ENCODE measurements at regions of chr5 and their contacts with region 1.

Region 1: DNA sequence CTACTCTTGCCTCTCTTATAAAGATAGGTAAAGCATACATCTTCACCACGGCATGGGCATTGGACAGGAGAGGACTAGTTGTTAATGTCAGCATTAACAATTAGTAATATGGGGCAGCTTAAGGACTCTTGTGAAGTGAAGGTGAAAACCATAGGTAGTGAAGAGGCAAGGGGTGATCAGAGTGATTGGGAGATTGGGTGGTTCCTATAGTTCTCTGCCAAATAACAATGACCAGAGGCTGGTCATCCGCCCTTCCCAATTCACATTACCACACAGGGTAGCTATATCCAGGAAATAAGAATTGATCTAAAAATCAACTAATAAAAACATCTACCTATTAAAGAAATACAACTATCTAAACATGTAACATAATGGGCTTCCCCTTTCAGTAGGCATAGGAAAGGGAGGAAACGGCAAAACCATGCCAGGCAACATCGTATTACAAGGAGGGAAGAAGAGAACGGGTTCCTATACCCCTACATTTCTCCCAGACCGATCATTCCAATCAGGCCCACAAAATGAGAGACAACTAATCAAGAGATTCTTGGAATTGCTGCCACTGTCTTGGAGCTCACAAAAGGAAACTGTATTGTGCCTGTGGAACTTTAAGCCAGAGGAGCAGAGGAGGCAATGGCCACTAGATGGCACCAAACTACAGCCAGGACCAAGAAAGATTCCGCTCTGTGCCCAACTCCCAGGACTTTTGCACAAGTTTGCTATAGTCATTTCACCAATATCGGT is 121.6 kb downstream of the FBXL17 start:
- DNase-seq: no peak
- H3K4me3 ChIP-seq: no peak overlapping the region
- H3K27ac ChIP-seq: no peak overlapping the region
- H3K4me1 ChIP-seq: peaks cover 13 to 25% (median 22%) of the 10 kb centered on the region in 4 donors
- H3K27me3 ChIP-seq: no peaks in the 10 kb centered on the region
- CTCF ChIP-seq: peak; percentile 77 to 98 (median 94)
- EP300 ChIP-seq: no peak
- POLR2A ChIP-seq: no peak

Region 2: DNA sequence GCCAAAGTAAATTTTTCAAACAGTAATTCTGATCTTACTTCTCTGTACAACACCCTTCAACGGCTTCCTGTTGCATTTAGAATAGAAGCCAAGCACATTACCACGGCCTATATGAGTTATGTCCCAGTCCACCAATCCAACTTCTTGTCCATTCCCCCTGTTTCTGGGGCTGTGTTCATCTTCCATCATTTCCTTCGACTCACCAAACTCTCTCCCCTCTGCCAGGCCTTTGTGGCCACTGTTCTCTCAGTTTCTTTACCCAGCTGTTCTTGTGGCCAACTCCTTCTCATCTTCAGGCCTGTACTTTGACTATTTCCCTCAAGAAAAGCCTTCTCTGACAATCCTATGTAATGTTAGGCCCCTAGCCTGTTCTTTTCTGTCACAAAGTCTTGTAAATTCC is 330.2 kb before region 1 on chr5:
- intact Hi-C with region 1: no loop called
- DNase-seq: no peak
- H3K4me3 ChIP-seq: no peak overlapping the region
- H3K27ac ChIP-seq: no peak overlapping the region
- H3K4me1 ChIP-seq: peaks cover 0 to 11% (median 6%) of the 10 kb centered on the region in 4 donors
- H3K27me3 ChIP-seq: no peaks in the 10 kb centered on the region
- CTCF ChIP-seq: no peak
- EP300 ChIP-seq: no peak
- POLR2A ChIP-seq: no peak

Region 3: DNA sequence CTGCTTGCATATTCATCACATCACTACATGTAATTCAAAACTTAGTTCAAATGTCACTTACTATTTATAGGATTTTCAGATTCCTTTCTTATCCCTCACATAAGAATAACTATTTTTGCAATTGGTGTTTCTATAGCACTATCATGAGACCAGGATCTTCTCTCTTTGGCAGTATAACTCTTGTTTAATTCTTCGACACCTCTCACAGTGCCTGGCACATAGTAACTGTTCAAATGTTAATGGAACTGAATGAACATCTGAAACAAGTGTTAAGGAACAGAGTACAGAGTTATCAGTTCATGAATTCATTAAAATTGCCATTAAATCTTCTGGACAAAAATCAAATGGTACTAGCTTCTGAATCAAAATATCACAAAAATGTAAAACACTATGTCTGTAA is 81.6 kb after region 1 on chr5:
- intact Hi-C with region 1: loop called (anchors 5 kb)
- DNase-seq: no peak
- H3K4me3 ChIP-seq: no peak overlapping the region
- H3K27ac ChIP-seq: no peak overlapping the region
- H3K4me1 ChIP-seq: no peaks in the 10 kb centered on the region
- H3K27me3 ChIP-seq: no peaks in the 10 kb centered on the region
- CTCF ChIP-seq: no peak
- EP300 ChIP-seq: no peak
- POLR2A ChIP-seq: no peak

Region 4: DNA sequence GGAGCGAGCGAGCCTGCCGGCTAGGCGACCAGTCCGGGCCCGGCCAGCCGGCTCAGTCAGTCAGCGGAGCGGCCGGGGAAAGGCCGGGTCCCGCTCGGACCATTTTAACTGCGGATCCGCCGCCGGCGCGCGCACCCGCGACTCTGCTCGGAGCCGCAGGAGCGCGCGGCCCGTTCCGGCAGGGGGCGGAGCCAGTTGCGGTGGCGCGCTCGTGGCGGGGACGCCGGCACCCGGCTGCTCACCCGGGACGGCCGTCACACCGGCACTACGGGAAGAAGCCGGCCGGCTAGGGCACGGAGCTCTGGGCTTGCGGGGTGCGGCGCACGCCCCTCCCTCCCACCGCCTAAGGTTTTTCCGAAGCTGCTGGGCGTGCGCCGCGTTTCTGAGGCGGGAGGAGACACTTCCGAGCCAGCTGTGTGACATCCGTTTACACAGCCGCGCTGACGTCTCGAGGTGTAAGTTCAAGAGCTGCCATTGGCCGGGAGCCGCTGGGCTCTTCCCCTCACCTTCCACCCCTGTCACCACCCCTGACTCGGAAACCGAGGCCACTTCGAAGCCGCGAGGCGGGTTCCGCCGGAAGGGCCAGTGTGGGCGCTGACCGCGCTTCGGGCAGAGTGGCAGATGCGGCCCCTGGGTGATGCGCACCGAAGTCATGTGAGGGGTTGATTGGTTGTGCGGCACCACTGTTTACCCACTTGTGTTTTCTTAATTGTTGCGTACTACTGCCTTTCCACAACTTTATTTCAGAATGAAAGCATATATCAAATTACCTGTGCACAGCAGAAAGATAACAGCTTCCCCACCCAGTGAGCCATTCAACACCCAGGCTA is 121.9 kb after region 1 on chr5 and contains the start of gene FBXL17:
- intact Hi-C with region 1: loop called (anchors 2 kb)
- DNase-seq: peak; percentile 98
- H3K4me3 ChIP-seq: peak within 1 kb of the TSS; percentile 71 to 95 (median 79)
- H3K27ac ChIP-seq: peak within 1 kb of the TSS; percentile 94 to 99 (median 96)
- H3K4me1 ChIP-seq: peaks cover 18 to 31% (median 29%) of the 10 kb centered on the region in 4 donors
- H3K27me3 ChIP-seq: no peaks in the 10 kb centered on the region
- CTCF ChIP-seq: no peak
- EP300 ChIP-seq: no peak
- POLR2A ChIP-seq: peak; percentile 74
- total RNA-seq, gene FBXL17: 14.4 to 22.0 (median 16.6) TPM